Lower lobe of right lung (tissue), 2 donors: ENCODE measurements at regions of chr3 and their contacts with region 1.

Region 1: DNA sequence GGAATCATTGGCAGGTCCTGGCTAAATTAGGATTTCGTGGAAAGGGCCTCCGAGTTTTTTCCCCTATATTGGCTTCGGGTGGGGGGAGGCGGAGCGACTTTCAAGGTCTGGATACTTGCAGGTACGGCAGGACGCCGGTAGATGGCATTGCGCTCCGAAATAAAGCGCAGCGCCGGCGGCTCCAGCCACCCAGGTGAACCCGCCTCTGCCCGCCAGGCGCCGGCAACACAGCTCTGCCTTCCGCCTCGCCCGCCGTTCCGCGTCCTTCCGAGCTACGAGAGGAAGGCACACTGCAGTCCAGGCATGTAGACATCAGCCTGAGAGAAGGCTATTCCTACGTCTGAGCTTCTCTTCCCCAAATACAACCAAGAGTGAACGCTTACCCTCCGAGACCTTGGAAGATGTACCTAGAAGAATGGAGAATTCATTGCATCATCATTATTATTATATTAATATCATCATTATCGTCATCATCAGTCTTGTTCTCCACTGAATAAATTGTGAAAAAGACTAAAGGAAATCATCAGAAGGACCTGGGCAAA is 514.1 kb downstream of the MECOM start:
- DNase-seq: peak; percentile 91
- ATAC-seq: peak; percentile 84 to 94
- H3K4me3 ChIP-seq: peak overlapping the region; percentile 44
- H3K27ac ChIP-seq: peak overlapping the region; percentile 73
- H3K4me1 ChIP-seq: peaks cover 51% of the 10 kb centered on the region
- H3K27me3 ChIP-seq: peaks cover 26% of the 10 kb centered on the region
- CTCF ChIP-seq: peak; percentile 83

Region 2: DNA sequence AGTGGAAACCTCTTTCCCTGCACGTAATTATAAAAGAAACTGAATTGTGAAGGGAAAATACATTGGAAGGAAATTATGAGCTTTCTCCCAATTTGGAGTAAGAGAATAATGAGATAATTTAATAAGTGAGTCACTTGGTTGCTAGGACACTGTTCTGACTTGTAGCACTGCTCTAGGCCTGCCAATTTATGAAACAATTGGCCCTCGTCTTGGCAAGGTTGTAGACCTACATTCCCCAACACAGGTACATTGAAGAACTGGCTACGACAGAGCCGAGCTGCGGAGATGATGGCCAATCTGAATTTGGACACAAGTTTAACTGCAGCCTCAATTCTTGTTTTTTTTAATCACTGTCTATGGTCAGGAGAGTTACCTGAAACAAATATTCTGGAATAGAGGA is 160.0 kb before region 1 on chr3:
- intact Hi-C with region 1: no loop called
- DNase-seq: no peak
- ATAC-seq: no peak
- H3K4me3 ChIP-seq: no peak overlapping the region
- H3K27ac ChIP-seq: no peak overlapping the region
- H3K4me1 ChIP-seq: no peaks in the 10 kb centered on the region
- H3K27me3 ChIP-seq: no peaks in the 10 kb centered on the region
- CTCF ChIP-seq: no peak

Region 3: DNA sequence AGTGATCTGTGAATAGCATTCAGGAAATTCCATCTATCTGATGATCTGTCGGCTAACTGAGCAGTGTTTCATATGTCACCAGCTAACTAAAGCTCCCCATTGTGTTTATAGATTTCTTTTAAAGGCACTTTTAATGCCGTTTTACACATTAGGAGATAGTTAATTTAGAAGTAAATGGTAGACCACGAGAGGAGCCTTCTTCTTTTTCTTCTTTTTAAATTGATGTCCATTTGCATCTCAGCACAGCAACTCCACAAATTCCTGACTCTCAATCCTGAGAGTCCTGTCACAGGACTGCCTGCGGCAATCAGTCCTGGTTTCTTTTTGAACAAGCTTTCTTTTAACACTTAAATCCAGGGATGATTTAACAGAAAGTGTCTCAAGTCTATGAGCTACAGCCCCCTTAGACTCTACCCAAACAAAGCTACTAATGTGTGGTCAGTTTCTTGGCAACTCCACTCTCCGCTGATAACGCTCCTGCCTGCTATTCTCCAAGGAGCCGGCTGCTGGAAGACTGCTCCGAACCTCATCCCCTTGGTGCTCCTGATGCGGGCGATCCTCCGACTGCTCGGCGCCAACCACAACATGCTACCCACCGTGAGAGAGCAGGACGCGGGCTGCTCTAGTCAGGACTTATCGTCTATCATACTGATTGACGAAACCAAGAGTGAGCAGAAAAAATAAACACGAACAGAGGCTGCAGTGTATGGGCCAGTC is 92.7 kb after region 1 on chr3:
- intact Hi-C with region 1: loop called (anchors 10 kb)
- DNase-seq: peak; percentile 53
- ATAC-seq: peak; percentile 64 to 75
- H3K4me3 ChIP-seq: peak overlapping the region; percentile 47
- H3K27ac ChIP-seq: peak overlapping the region; percentile 80
- H3K4me1 ChIP-seq: peaks cover 8% of the 10 kb centered on the region
- H3K27me3 ChIP-seq: no peaks in the 10 kb centered on the region
- CTCF ChIP-seq: no peak